ENCODE measurements at regions of chr16 and their contacts with region 1.

Region 1: DNA sequence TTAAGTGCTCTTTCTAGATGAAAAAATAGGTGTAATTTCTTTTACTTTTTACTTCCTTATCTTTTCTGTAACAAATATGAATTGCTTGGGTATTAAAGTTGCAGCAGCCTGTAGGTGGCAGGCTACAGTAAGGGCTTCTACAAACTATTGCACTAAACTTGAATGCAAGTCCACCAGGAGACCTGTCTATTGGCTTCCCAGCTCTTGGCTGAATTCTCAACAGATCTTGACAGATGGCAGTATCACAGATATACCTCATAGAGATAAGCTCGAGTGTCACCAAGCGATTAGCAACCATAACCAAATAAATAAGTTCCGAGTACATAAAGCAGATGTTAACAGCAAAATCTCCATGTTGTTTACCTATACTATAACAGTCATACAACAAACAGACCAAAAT is 5.9 kb downstream of the BBS2 start:
- DNase-seq: peak in 8 of 9 experiments; percentile 9 to 76 (median 52)
- ATAC-seq: peak; percentile 94
- H3K4me3 ChIP-seq: no peak overlapping the region
- H3K4me3 Mint-ChIP-seq: no peak overlapping the region
- H3K27ac ChIP-seq: no peak overlapping the region
- H3K27ac Mint-ChIP-seq: peak overlapping the region; percentile 7
- H3K4me1 ChIP-seq: peaks cover 33% of the 10 kb centered on the region
- H3K4me1 Mint-ChIP-seq: peaks cover 58% of the 10 kb centered on the region
- H3K27me3 ChIP-seq: no peaks in the 10 kb centered on the region
- H3K27me3 Mint-ChIP-seq: no peaks in the 10 kb centered on the region
- CTCF ChIP-seq: peak; percentile 80

Region 2: GRCh38 chr16:56600398-56600999 is 86.5 kb after region 1 on chr16:
- CTCF ChIA-PET with region 1: interaction called, 5 read pairs
- POLR2A ChIA-PET with region 1: no interaction called
- intact Hi-C with region 1: loop called (anchors 1 to 10 kb)
- DNase-seq: peak in 4 of 9 experiments; percentile 25 to 71 (median 48)
- ATAC-seq: peak; percentile 62
- H3K4me3 ChIP-seq: no peak overlapping the region
- H3K4me3 Mint-ChIP-seq: no peak overlapping the region
- H3K27ac ChIP-seq: no peak overlapping the region
- H3K27ac Mint-ChIP-seq: no peak overlapping the region
- H3K4me1 ChIP-seq: no peaks in the 10 kb centered on the region
- H3K4me1 Mint-ChIP-seq: peaks cover 1% of the 10 kb centered on the region
- H3K27me3 ChIP-seq: peaks cover 0 to 3% of the 10 kb centered on the region in 2 experiments
- H3K27me3 Mint-ChIP-seq: peaks cover 4% of the 10 kb centered on the region
- CTCF ChIP-seq: peak; percentile 42